Activated CD4-positive, alpha-beta memory T cell treated with anti-CD3 and anti-CD28 coated beads for 36 hours (primary cell): ENCODE measurements at regions of chr3 and their contacts with region 1.

Region 1: GRCh38 chr3:87298111-87298718 is 21.8 kb upstream of the POU1F1 start:
- DNase-seq: no peak
- H3K4me3 Mint-ChIP-seq: no peak overlapping the region
- H3K27ac Mint-ChIP-seq: no peak overlapping the region
- H3K4me1 Mint-ChIP-seq: peaks cover 2% of the 10 kb centered on the region
- H3K27me3 Mint-ChIP-seq: peaks cover 5% of the 10 kb centered on the region

Region 2: DNA sequence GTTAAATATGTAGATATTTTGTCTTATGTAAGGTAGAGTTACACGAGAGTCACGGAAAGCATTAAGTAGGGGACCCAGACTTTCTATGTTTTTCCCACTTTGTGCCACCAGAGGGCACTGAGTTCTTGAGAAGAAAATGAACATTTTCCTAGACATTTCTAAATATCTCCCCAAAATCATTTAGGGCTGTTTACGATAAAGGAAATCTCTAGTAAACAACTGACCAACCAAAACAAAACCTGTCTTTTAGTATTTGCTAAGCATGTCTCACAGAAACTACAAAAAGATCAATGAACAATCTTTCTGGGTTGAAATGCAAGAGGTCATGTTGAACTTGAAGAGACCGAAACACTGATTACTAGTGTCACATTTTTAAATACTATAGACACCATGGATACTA is 37.9 kb before region 1 on chr3:
- CTCF ChIA-PET with region 1: interaction called, 10 read pairs
- POLR2A ChIA-PET with region 1: no interaction called
- intact Hi-C with region 1: no loop called
- DNase-seq: peak; percentile 40
- H3K4me3 Mint-ChIP-seq: no peak overlapping the region
- H3K27ac Mint-ChIP-seq: no peak overlapping the region
- H3K4me1 Mint-ChIP-seq: peaks cover 3% of the 10 kb centered on the region
- H3K27me3 Mint-ChIP-seq: no peaks in the 10 kb centered on the region

Region 3: GRCh38 chr3:87287011-87287410 is 11.2 kb before region 1 on chr3:
- CTCF ChIA-PET with region 1: interaction called, 12 read pairs
- POLR2A ChIA-PET with region 1: no interaction called
- intact Hi-C with region 1: no loop called
- DNase-seq: no peak
- H3K4me3 Mint-ChIP-seq: no peak overlapping the region
- H3K27ac Mint-ChIP-seq: no peak overlapping the region
- H3K4me1 Mint-ChIP-seq: peaks cover 3% of the 10 kb centered on the region
- H3K27me3 Mint-ChIP-seq: peaks cover 5% of the 10 kb centered on the region

Region 4: GRCh38 chr3:87350364-87351199 is 52.4 kb after region 1 on chr3:
- CTCF ChIA-PET with region 1: interaction called, 11 read pairs
- POLR2A ChIA-PET with region 1: no interaction called
- intact Hi-C with region 1: loop called (anchors 1 kb)
- DNase-seq: peak; percentile 16
- H3K4me3 Mint-ChIP-seq: no peak overlapping the region
- H3K27ac Mint-ChIP-seq: no peak overlapping the region
- H3K4me1 Mint-ChIP-seq: no peaks in the 10 kb centered on the region
- H3K27me3 Mint-ChIP-seq: no peaks in the 10 kb centered on the region

Region 5: GRCh38 chr3:87503900-87504508 is 205.8 kb after region 1 on chr3:
- CTCF ChIA-PET with region 1: interaction called, 37 read pairs
- POLR2A ChIA-PET with region 1: no interaction called
- intact Hi-C with region 1: loop called (anchors 1 kb)
- DNase-seq: peak; percentile 10
- H3K4me3 Mint-ChIP-seq: no peak overlapping the region
- H3K27ac Mint-ChIP-seq: no peak overlapping the region
- H3K4me1 Mint-ChIP-seq: no peaks in the 10 kb centered on the region
- H3K27me3 Mint-ChIP-seq: no peaks in the 10 kb centered on the region

Region 6: GRCh38 chr3:87581240-87581877 is 283.1 kb after region 1 on chr3:
- CTCF ChIA-PET with region 1: no interaction called
- POLR2A ChIA-PET with region 1: no interaction called
- intact Hi-C with region 1: no loop called
- DNase-seq: no peak
- H3K4me3 Mint-ChIP-seq: no peak overlapping the region
- H3K27ac Mint-ChIP-seq: no peak overlapping the region
- H3K4me1 Mint-ChIP-seq: no peaks in the 10 kb centered on the region
- H3K27me3 Mint-ChIP-seq: no peaks in the 10 kb centered on the region

Region 7: GRCh38 chr3:87771341-87772192 is 473.4 kb after region 1 on chr3:
- CTCF ChIA-PET with region 1: interaction called, 3 read pairs
- POLR2A ChIA-PET with region 1: no interaction called
- intact Hi-C with region 1: loop called (anchors 2 kb)
- DNase-seq: peak; percentile 33
- H3K4me3 Mint-ChIP-seq: no peak overlapping the region
- H3K27ac Mint-ChIP-seq: no peak overlapping the region
- H3K4me1 Mint-ChIP-seq: no peaks in the 10 kb centered on the region
- H3K27me3 Mint-ChIP-seq: peaks cover 4% of the 10 kb centered on the region

Region 8: DNA sequence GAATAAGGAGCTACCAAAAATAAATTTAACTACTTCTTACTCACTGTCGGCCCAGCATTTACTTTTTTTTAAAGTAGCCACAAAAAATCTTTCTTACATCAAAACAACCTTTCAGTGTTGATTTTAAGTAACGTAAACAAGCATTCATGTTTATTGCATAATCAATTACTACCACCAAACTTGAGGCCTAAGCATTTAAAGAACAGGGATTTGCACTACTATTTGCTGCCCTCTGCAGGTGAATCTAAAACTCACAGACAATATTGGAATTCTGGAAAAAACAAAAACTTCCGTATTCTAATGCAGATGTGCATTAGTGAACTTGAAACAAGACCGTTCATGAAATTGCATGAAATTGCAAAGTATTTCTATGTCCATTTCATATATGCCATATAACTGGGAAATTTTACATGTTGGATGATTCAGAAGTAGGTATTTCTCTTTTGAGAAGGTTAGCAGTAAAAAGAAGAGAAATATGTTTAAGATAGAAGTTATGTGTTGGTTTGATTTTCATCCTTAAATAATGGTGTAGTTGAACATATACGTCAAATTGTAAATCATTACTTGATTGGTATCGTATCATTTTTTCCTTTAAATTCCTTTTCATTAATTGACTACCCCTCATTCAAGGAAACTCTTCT is 705.0 kb after region 1 on chr3:
- CTCF ChIA-PET with region 1: interaction called, 11 read pairs
- POLR2A ChIA-PET with region 1: no interaction called
- intact Hi-C with region 1: loop called (anchors 2 kb)
- DNase-seq: no peak
- H3K4me3 Mint-ChIP-seq: no peak overlapping the region
- H3K27ac Mint-ChIP-seq: no peak overlapping the region
- H3K4me1 Mint-ChIP-seq: no peaks in the 10 kb centered on the region
- H3K27me3 Mint-ChIP-seq: peaks cover 2% of the 10 kb centered on the region